ENCODE measurements at regions of chr11 and their contacts with region 1.

Region 1: GRCh38 chr11:73965076-73965860 is 14.4 kb downstream of the DNAJB13 start:
- DNase-seq: peak in 1 of 7 donors; percentile 10
- H3K4me3 ChIP-seq: no peak overlapping the region
- H3K27ac ChIP-seq: no peak overlapping the region
- H3K4me1 ChIP-seq: no peaks in the 10 kb centered on the region
- H3K27me3 ChIP-seq: no peaks in the 10 kb centered on the region
- CTCF ChIP-seq: no peak
- POLR2A ChIP-seq: no peak

Region 2: DNA sequence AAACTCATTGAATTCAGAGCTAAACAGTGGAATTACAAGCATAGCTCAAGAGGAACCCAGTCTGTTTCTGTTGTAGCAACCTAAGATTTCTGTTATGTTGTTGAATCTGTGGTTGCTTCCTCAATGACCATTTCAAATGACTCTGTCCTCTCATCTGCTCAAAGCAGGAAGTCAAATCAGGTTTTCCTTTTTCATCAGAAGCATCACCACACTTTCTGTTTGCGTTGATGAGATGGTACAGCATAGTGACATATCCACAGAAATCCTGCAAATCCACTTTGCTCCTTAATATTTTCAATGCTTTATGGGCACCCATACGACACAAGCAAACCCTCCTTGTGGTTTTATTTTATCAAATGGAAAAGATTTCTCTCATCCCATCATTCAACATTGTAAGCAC is 30.0 kb after region 1 on chr11:
- intact Hi-C with region 1: no loop called
- DNase-seq: no peak
- H3K4me3 ChIP-seq: no peak overlapping the region
- H3K27ac ChIP-seq: no peak overlapping the region
- H3K4me1 ChIP-seq: no peaks in the 10 kb centered on the region
- H3K27me3 ChIP-seq: no peaks in the 10 kb centered on the region
- CTCF ChIP-seq: no peak
- POLR2A ChIP-seq: no peak

Region 3: GRCh38 chr11:74069147-74070047 is 104.1 kb after region 1 on chr11:
- intact Hi-C with region 1: loop called (anchors 10 kb)
- DNase-seq: no peak
- H3K4me3 ChIP-seq: no peak overlapping the region
- H3K27ac ChIP-seq: no peak overlapping the region
- H3K4me1 ChIP-seq: peaks cover 0 to 19% of the 10 kb centered on the region in 2 donors
- H3K27me3 ChIP-seq: no peaks in the 10 kb centered on the region
- CTCF ChIP-seq: no peak
- POLR2A ChIP-seq: no peak

Measured in adrenal gland (tissue), 19 donors.